GM10248 (cell line): ENCODE measurements at regions of chr9 and their contacts with region 1.

Region 1: GRCh38 chr9:97501177-97501971 is at the start of gene TMOD1:
- DNase-seq: peak; percentile 93
- CTCF ChIP-seq: peak; percentile 52

Region 2: DNA sequence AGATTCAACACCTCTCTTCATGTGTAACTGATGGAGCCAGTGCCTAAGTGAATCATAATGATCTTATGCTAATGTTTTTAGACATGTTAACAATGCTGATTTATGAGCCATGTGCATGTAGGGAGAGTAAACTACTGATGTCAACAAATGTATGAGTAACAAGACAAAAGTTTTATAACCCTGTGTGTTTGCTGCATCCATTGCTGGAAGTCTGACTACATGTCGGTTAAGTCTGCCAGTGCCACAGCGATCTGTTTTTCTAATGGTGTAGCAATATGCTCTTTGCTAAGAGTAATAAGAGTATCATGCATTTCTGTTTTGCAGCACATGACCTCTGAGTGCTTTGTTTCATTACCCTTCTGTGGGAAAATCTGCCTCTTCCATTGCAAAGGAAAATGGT is 26.3 kb before region 1 on chr9:
- CTCF ChIA-PET with region 1: interaction called, 159 read pairs
- POLR2A ChIA-PET with region 1: no interaction called
- DNase-seq: no peak
- CTCF ChIP-seq: no peak

Region 3: DNA sequence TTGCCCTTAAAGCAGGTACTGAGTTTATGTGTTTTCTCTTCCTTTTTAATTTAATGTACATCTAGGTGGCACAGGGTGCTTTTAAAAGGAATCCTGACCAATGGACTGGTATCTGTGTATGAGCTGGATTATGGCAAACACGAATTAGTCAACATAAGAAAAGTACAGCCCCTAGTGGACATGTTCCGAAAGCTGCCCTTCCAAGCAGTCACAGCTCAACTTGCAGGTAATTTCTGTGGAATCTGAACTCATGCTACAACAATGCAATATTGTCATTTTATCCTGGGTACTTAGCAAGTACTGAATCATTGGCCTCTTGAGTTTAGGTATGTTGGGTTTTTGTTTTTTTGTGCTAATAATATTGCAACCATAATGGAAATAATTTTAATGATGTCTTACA is 14.3 kb before region 1 on chr9:
- CTCF ChIA-PET with region 1: interaction called, 22 read pairs
- POLR2A ChIA-PET with region 1: no interaction called
- DNase-seq: no peak
- CTCF ChIP-seq: no peak

Region 4: GRCh38 chr9:97518909-97519307 is 17.5 kb after region 1 on chr9:
- CTCF ChIA-PET with region 1: interaction called, 80 read pairs
- POLR2A ChIA-PET with region 1: interaction called, 3 read pairs
- DNase-seq: no peak
- CTCF ChIP-seq: no peak

Region 5: GRCh38 chr9:97528529-97529230 is 27.3 kb after region 1 on chr9:
- CTCF ChIA-PET with region 1: interaction called, 14 read pairs
- POLR2A ChIA-PET with region 1: no interaction called
- DNase-seq: peak; percentile 42
- CTCF ChIP-seq: no peak

Region 6: GRCh38 chr9:97696803-97697601 is 195.6 kb after region 1 on chr9 and contains the start of gene XPA:
- CTCF ChIA-PET with region 1: no interaction called
- POLR2A ChIA-PET with region 1: interaction called, 10 read pairs
- DNase-seq: peak; percentile 99
- CTCF ChIP-seq: no peak